Astrocyte of the cerebellum (primary cell): ENCODE measurements at regions of chr5 and their contacts with region 1.

Region 1: DNA sequence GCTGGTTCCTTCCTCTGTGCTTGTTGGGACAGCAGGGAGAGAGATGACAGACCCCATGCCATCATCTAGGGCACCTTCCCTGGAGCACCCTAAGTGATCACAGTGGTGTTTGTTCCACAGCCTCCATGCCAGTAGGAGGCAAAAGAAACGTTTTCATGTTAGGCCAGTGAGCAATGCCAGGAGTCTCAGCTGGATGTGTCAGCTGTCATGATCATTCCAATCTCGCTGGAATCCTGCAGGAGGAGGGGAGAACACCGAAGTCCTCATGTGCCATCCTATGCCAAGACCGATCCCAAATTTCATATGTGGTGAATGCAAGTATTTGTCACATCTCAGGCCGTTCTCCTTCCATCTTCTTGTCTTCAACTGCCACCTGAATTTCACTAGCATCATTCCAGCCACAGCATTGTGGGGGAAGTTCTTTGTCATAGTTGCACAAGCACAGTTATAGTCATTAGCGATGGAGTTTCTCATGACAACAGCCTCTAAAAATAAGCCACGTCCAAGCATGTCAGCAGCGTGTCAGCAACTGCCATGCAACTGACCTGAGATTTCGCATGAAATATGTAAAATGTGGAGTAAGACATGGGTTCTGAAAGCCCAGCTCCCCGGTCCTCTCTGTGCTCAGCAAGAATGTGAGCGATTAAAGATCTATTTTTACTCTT is 97.2 kb upstream of the DNAH5 start:
- DNase-seq: no peak
- H3K4me3 ChIP-seq: no peak overlapping the region
- CTCF ChIP-seq: no peak

Region 2: DNA sequence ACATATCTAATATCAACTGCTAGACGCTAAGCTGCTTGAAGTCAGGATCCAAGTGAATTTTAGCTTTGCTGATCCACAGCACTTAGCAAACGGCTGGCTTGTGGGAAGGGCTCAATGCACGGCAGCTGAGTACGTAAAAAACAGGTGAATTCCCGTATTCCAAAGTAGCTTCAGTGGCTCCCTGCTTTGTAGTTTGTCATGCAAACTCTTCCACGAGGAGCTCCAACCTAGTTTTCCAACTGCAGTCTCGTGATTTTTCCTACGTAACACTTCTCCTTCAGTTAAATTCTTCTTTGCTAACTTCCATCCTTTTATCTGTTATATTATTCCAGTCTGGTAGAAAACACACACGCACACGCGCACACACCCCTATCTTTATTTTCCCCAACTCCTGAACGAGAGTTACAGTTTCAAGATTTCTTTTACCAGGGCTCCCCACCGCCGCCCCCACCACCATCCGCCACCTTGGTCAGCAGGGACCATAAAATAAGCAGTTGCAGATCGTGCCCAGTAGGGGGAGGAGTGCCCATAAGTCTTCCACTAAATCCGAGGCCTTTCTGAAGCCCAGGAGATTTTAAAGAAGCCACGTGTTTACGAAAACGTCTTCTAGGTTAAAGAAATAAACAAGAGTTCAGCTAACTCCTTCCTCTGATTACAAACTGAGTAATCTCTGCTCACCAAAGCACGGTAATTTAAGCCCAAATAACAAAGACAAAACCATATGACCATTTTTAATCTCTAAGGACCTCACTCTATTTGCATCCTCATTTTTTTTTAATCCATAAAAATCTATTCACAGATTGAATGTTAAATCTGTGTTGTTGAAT is 66.7 kb after region 1 on chr5:
- in situ Hi-C with region 1: loop called (anchors 5 kb)
- DNase-seq: peak; percentile 64
- H3K4me3 ChIP-seq: no peak overlapping the region
- CTCF ChIP-seq: peak; percentile 72